SK-N-SH (cell line): ENCODE measurements at regions of chr7 and their contacts with region 1.

Region 1: GRCh38 chr7:19491821-19492452 is 216.9 kb downstream of the POLR1F start:
- DNase-seq: peak; percentile 27
- H3K4me3 ChIP-seq: no peak overlapping the region
- H3K27ac ChIP-seq: no peak overlapping the region
- H3K4me1 ChIP-seq: no peaks in the 10 kb centered on the region
- H3K27me3 ChIP-seq: no peaks in the 10 kb centered on the region
- CTCF ChIP-seq: peak; percentile 88
- EP300 ChIP-seq: no peak
- RAD21 ChIP-seq: peak; percentile 64

Region 2: DNA sequence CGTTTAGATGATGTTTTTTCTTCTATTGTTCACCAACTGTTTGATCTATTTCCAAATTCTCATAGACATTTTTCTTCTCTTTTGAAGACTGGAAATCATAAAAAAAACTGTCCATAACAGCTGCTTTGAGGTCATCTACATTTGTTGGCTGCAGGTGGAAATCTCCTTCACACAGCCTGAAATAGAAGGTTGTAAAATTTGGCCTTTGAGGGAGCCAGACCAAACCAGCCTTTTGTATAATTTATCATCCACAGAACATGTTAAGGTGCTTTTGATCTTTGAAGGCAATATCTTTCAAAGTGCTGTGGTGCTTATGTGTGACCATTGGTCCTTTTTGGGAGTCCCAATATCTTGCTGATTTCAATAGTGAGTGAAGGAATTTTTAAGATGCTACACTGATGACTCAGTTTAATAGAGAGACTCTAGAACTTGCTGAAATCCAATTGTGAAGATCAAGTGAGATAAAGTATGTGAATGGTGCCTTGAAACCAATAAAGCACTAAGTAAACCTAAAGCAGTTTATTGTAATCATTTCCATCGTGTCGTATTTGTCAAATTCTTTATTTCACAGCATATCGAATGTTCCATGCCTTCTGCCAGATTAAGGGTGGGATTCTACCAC is 352.1 kb before region 1 on chr7:
- CTCF ChIA-PET with region 1: no interaction called
- POLR2A ChIA-PET with region 1: no interaction called
- DNase-seq: no peak
- H3K4me3 ChIP-seq: no peak overlapping the region
- H3K27ac ChIP-seq: no peak overlapping the region
- H3K4me1 ChIP-seq: no peaks in the 10 kb centered on the region
- H3K27me3 ChIP-seq: no peaks in the 10 kb centered on the region
- CTCF ChIP-seq: no peak
- EP300 ChIP-seq: no peak
- RAD21 ChIP-seq: no peak

Region 3: GRCh38 chr7:19397911-19398310 is 94.0 kb before region 1 on chr7:
- CTCF ChIA-PET with region 1: no interaction called
- POLR2A ChIA-PET with region 1: no interaction called
- DNase-seq: no peak
- H3K4me3 ChIP-seq: no peak overlapping the region
- H3K27ac ChIP-seq: no peak overlapping the region
- H3K4me1 ChIP-seq: no peaks in the 10 kb centered on the region
- H3K27me3 ChIP-seq: peaks cover 13% of the 10 kb centered on the region; the same call in 1 of the 2 replicates
- CTCF ChIP-seq: no peak
- EP300 ChIP-seq: no peak
- RAD21 ChIP-seq: no peak

Region 4: GRCh38 chr7:19508124-19508523 is 16.2 kb after region 1 on chr7:
- CTCF ChIA-PET with region 1: interaction called, 11 read pairs
- POLR2A ChIA-PET with region 1: no interaction called
- DNase-seq: no peak
- H3K4me3 ChIP-seq: no peak overlapping the region
- H3K27ac ChIP-seq: no peak overlapping the region
- H3K4me1 ChIP-seq: no peaks in the 10 kb centered on the region; a peak in 1 of 4 replicates
- H3K27me3 ChIP-seq: 0 out of 2 replicates have a peak, but pooled peaks cover 11% of the 10 kb centered on the region
- CTCF ChIP-seq: no peak
- EP300 ChIP-seq: no peak
- RAD21 ChIP-seq: no peak

Region 5: GRCh38 chr7:20083781-20084180 is 591.8 kb after region 1 on chr7:
- CTCF ChIA-PET with region 1: no interaction called
- POLR2A ChIA-PET with region 1: no interaction called
- DNase-seq: no peak
- H3K4me3 ChIP-seq: no peak overlapping the region
- H3K27ac ChIP-seq: no peak overlapping the region
- H3K4me1 ChIP-seq: no peaks in the 10 kb centered on the region
- H3K27me3 ChIP-seq: no peaks in the 10 kb centered on the region
- CTCF ChIP-seq: no peak
- EP300 ChIP-seq: no peak
- RAD21 ChIP-seq: no peak

Region 6: GRCh38 chr7:20395511-20395910 is 903.6 kb after region 1 on chr7:
- CTCF ChIA-PET with region 1: no interaction called
- POLR2A ChIA-PET with region 1: no interaction called
- DNase-seq: no peak
- H3K4me3 ChIP-seq: no peak overlapping the region
- H3K27ac ChIP-seq: no peak overlapping the region
- H3K4me1 ChIP-seq: no peaks in the 10 kb centered on the region; a peak in 1 of 4 replicates
- H3K27me3 ChIP-seq: no peaks in the 10 kb centered on the region
- CTCF ChIP-seq: no peak
- EP300 ChIP-seq: no peak
- RAD21 ChIP-seq: no peak